Activated B cell treated with CpG ODN at 0.5 μM for 24 hours (primary cell): ENCODE measurements at regions of chr3 and their contacts with region 1.

Region 1: DNA sequence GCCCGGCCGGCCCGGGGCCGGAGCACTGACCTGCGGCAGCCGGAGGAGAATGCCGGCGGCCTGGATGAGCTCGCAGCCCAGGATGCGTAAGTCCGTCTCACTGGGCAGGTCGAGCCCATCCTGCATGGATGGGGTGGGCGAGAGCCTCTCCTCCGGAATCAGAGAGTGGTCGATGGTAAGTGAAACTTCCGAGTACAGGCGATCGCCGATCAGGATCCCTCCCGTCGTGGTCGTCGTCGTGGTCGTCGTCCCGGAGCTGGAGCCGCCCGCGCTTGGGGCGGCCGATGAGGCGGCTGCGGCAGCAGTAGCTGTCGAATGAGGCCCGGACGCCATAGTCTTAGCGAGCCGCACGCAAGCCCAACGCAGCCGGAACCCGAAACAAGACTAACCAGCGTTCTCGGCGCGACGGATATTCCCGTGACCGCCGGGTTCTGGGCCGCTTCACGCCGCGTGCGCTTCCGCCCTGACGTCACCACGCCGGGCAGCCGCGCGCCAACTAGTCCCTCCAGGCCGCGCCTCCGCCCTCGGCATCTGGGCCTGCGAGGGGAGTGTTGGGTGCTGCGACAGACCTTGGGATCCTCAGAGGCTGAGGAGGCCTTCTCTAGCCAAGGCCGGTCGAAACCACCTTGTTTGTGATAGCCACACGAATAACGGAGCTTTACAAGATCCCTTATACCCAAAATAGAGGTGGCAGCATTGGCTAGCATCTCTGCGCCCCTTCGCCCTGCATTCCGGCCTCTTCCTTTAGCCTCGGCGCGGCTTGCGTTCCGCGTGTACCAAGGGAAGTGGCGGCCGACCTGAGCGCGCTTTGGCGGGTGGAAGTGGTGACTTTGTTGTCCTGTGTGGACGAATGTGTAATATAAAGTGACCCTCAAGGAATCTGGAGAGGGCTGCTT is at the start of gene CCNL1:
- DNase-seq: peak; percentile 96
- ATAC-seq: peak; percentile 78
- H3K4me3 Mint-ChIP-seq: peak within 1 kb of the TSS; percentile 99
- H3K27ac Mint-ChIP-seq: peak within 1 kb of the TSS; percentile 98
- H3K4me1 Mint-ChIP-seq: peaks cover 59% of the 10 kb centered on the region
- H3K27me3 Mint-ChIP-seq: no peaks in the 10 kb centered on the region
- CTCF ChIP-seq: no peak
- total RNA-seq, gene CCNL1: 184 and 222 TPM in 2 replicates

Region 2: GRCh38 chr3:155854141-155854940 is 1305.7 kb before region 1 on chr3 and contains the start of gene SLC33A1:
- CTCF ChIA-PET with region 1: no interaction called
- POLR2A ChIA-PET with region 1: no interaction called
- intact Hi-C with region 1: loop called (anchors 1 kb)
- DNase-seq: peak; percentile 97
- ATAC-seq: peak; percentile 91
- H3K4me3 Mint-ChIP-seq: peak within 1 kb of the TSS; percentile 98
- H3K27ac Mint-ChIP-seq: peak within 1 kb of the TSS; percentile 98
- H3K4me1 Mint-ChIP-seq: peaks cover 41% of the 10 kb centered on the region
- H3K27me3 Mint-ChIP-seq: no peaks in the 10 kb centered on the region
- CTCF ChIP-seq: no peak
- total RNA-seq, gene SLC33A1: 19.8 and 23.3 TPM in 2 replicates

Region 3: GRCh38 chr3:156522673-156523072 is 637.3 kb before region 1 on chr3:
- CTCF ChIA-PET with region 1: no interaction called
- POLR2A ChIA-PET with region 1: no interaction called
- intact Hi-C with region 1: no loop called
- DNase-seq: no peak
- ATAC-seq: no peak
- H3K4me3 Mint-ChIP-seq: no peak overlapping the region
- H3K27ac Mint-ChIP-seq: no peak overlapping the region
- H3K4me1 Mint-ChIP-seq: peaks cover 9% of the 10 kb centered on the region
- H3K27me3 Mint-ChIP-seq: peaks cover 8% of the 10 kb centered on the region
- CTCF ChIP-seq: no peak

Region 4: GRCh38 chr3:156554842-156555687 is 604.9 kb before region 1 on chr3 and contains the start of gene SSR3:
- CTCF ChIA-PET with region 1: no interaction called
- POLR2A ChIA-PET with region 1: interaction called, 33 read pairs
- intact Hi-C with region 1: loop called (anchors 1 kb)
- DNase-seq: peak; percentile 94
- ATAC-seq: peak; percentile 99
- H3K4me3 Mint-ChIP-seq: peak within 1 kb of the TSS; percentile 98
- H3K27ac Mint-ChIP-seq: peak within 1 kb of the TSS; percentile 91
- H3K4me1 Mint-ChIP-seq: peaks cover 37% of the 10 kb centered on the region
- H3K27me3 Mint-ChIP-seq: no peaks in the 10 kb centered on the region
- CTCF ChIP-seq: no peak
- total RNA-seq, gene SSR3: 64.3 and 69.2 TPM in 2 replicates

Region 5: GRCh38 chr3:156576651-156577343 is 583.2 kb before region 1 on chr3:
- CTCF ChIA-PET with region 1: no interaction called
- POLR2A ChIA-PET with region 1: no interaction called
- intact Hi-C with region 1: no loop called
- DNase-seq: no peak
- ATAC-seq: no peak
- H3K4me3 Mint-ChIP-seq: no peak overlapping the region
- H3K27ac Mint-ChIP-seq: no peak overlapping the region
- H3K4me1 Mint-ChIP-seq: no peaks in the 10 kb centered on the region
- H3K27me3 Mint-ChIP-seq: peaks cover 2% of the 10 kb centered on the region
- CTCF ChIP-seq: no peak

Region 6: GRCh38 chr3:157088601-157089454 is 71.2 kb before region 1 on chr3:
- CTCF ChIA-PET with region 1: no interaction called
- POLR2A ChIA-PET with region 1: interaction called, 47 read pairs
- intact Hi-C with region 1: loop called (anchors 1 kb)
- DNase-seq: peak; percentile 92
- ATAC-seq: peak; percentile 92
- H3K4me3 Mint-ChIP-seq: peak overlapping the region; percentile 90
- H3K27ac Mint-ChIP-seq: peak overlapping the region; percentile 90
- H3K4me1 Mint-ChIP-seq: peaks cover 26% of the 10 kb centered on the region
- H3K27me3 Mint-ChIP-seq: peaks cover 1% of the 10 kb centered on the region
- CTCF ChIP-seq: no peak

Region 7: GRCh38 chr3:157174649-157175498 is 14.9 kb after region 1 on chr3:
- CTCF ChIA-PET with region 1: interaction called, 49 read pairs
- POLR2A ChIA-PET with region 1: interaction called, 660 read pairs
- intact Hi-C with region 1: loop called (anchors 1 kb)
- DNase-seq: peak; percentile 91
- ATAC-seq: peak; percentile 90
- H3K4me3 Mint-ChIP-seq: peak overlapping the region; percentile 90
- H3K27ac Mint-ChIP-seq: peak overlapping the region; percentile 98
- H3K4me1 Mint-ChIP-seq: peaks cover 30% of the 10 kb centered on the region
- H3K27me3 Mint-ChIP-seq: no peaks in the 10 kb centered on the region
- CTCF ChIP-seq: no peak

Region 8: DNA sequence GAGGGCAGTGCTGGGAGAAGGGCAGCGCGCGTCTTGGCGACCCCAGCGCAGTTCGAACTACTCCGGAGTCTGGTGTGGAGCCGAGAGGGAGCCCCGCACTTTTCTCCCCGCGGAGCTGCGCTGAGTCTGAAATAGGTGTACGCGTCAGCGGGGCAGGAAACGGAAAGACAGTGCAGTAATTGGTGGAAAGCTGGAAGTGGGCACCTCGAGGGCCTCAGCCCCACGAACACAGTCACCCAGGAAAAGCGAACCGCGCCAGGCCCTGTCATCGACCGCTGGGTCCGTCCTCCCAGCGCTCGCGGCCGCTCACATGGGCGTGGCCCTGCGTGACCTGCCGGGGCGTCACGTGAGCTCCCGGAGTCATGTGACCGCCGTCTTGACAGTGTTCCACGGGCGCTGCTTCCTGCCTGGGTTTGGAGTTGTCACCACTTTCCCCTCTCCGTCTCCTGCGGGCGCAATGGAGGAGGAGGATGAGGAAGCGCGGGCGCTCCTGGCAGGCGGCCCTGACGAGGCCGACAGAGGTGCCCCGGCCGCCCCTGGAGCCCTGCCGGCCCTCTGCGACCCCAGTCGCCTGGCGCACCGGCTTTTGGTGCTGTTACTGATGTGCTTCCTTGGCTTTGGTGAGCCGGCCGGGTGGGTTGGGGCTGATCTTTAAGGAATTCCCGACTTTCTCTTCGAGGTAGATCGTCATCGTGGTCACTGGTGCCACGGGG is 1641.8 kb after region 1 on chr3 and contains the start of gene MFSD1:
- CTCF ChIA-PET with region 1: no interaction called
- POLR2A ChIA-PET with region 1: no interaction called
- intact Hi-C with region 1: loop called (anchors 5 kb)
- DNase-seq: peak; percentile 82
- ATAC-seq: peak; percentile 89
- H3K4me3 Mint-ChIP-seq: peak within 1 kb of the TSS; percentile 94
- H3K27ac Mint-ChIP-seq: peak within 1 kb of the TSS; percentile 87
- H3K4me1 Mint-ChIP-seq: peaks cover 37% of the 10 kb centered on the region
- H3K27me3 Mint-ChIP-seq: no peaks in the 10 kb centered on the region
- CTCF ChIP-seq: no peak
- total RNA-seq, gene MFSD1: 36.8 and 41.6 TPM in 2 replicates